ENCODE measurements at regions of chr15 and their contacts with region 1.

Region 1: DNA sequence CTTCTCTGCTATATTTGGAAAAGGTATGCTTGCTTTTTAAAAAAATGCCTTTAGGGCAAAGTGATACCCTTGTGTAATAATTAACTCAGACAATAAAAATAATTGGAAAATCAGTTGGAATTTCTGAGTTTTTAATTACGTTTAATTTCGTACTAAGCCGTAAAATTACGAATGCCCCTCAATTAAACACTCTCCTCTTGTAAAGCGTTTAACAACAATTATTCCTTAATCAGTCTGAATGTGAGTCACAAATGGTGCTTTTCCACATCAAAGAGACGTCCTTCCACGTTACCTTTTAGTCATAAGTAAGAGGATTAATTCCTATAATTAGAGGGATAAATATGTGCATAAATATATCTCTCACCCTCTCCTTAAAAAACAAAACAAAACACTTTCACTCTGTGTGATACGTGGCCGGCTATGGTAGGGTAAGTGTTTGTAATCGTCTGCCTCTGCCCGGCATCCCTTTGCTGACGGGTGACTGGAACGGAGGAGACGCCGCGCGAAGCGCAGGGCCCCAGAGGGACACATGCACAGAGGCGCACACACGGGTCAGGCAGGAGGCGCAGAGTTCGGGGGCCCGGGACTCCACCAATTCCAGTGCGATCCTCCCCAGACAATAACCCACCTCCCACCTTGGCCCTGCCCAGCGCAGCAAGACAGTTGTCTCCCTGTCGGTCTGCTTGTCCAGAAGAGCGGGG is 9.7 kb upstream of the MEIS2 start:
- DNase-seq: no peak
- H3K4me3 ChIP-seq: peak overlapping the region; percentile 41 to 49 (median 42)
- H3K27ac ChIP-seq: peak overlapping the region; percentile 66 to 79
- H3K4me1 ChIP-seq: no peaks in the 10 kb centered on the region
- H3K27me3 ChIP-seq: peaks cover 0 to 8% of the 10 kb centered on the region in 2 donors
- CTCF ChIP-seq: no peak
- POLR2A ChIP-seq: no peak

Region 2: DNA sequence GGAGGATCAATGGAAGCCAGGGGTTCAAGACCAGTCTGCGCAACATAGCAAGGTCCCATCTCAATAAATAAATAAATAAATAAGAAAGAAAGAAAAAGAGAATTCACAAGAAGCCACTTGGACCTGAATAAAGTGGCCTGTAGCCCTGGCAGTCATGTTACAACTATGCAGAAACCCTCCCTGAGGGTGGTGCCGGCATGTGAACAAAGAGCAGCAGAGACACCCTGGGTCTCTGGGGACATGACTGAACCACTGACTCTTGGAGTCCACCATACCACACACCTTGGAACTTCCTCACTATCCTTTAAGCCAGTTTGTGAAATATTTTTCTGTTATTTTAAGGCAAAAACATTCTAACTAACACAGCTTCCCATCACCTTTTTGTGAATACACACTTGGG is 102.7 kb before region 1 on chr15:
- intact Hi-C with region 1: loop called (anchors 5 kb)
- DNase-seq: no peak
- H3K4me3 ChIP-seq: no peak overlapping the region
- H3K27ac ChIP-seq: no peak overlapping the region
- H3K4me1 ChIP-seq: no peaks in the 10 kb centered on the region
- H3K27me3 ChIP-seq: no peaks in the 10 kb centered on the region
- CTCF ChIP-seq: no peak
- POLR2A ChIP-seq: no peak

Measured in breast epithelium (tissue), 4 donors.